Left colon (tissue), 2 donors: ENCODE measurements at regions of chr12 and their contacts with region 1.

Region 1: DNA sequence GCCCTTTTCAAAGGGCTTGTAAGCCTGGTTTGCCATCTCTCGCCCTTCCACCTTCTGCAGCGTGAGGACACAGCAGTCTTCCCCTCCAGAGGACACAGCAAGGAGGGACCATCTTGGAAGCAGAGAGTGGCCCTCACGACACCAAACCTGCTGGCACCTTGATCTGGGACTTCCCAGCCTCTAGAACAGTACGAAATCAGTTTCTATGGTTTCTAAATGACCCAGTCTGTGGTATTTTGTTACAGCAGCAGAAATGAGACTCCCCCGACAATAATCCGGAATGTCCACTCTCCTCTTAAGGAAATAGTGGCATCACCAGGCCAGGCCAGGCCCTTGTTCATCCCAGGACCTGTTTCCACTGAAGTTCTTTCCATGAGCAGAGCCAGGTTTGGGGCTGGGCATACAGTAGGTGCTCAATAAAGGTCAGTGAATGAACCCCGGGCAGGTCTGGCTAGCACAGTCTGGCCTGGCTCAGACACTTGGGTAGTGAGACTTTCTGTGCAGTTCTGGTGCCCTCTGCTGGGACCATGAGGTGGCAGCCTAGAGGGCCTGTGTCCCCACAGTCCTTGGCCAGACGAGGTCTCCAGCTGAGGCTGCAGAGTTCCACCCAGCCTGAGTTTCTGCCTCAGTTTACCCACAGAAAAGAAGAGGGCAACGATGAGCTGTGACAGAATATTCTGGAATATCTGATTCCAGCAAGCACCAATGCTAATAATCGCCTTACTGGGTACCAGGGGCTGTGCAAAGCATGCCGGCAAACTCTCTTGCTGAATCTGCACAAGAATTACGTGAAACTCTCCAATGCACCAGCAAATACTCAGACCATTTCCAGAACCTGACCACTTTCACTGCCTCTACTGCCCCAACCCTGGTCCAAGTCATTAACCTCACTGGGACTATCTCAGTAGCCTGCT is 14.0 kb downstream of the ABCB9 start:
- DNase-seq: peak; percentile 81 to 84
- ATAC-seq: peak; percentile 83

Region 2: DNA sequence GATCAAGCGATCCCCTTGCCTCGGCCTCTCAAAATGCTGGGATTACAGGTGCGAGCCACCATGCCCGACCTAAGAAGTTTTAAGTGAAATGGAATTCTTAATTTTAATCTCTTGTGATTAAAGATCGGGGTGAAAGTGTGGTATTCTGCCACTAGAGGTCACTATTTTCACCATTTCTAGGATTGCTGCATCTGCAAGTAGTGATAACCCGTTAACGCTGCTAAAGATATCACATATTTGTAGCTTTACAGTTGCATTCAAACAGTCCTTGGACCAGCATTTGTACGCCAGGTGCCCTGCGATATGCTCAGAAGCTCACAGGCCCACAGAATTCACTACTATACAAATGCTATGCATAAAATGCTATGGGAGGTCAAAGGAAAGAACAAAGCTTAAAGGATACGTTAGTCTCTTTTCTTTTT is 158.5 kb before region 1 on chr12:
- intact Hi-C with region 1: loop called in 1 of 2 experiments (anchors 5 kb)
- DNase-seq: no peak
- ATAC-seq: peak; percentile 69

Region 3: GRCh38 chr12:122860346-122861090 is 91.7 kb before region 1 on chr12:
- intact Hi-C with region 1: loop called (anchors 5 kb)
- DNase-seq: peak; percentile 78 to 89
- ATAC-seq: peak; percentile 42